PC-9 (cell line): ENCODE measurements at regions of chr3 and their contacts with region 1.

Region 1: DNA sequence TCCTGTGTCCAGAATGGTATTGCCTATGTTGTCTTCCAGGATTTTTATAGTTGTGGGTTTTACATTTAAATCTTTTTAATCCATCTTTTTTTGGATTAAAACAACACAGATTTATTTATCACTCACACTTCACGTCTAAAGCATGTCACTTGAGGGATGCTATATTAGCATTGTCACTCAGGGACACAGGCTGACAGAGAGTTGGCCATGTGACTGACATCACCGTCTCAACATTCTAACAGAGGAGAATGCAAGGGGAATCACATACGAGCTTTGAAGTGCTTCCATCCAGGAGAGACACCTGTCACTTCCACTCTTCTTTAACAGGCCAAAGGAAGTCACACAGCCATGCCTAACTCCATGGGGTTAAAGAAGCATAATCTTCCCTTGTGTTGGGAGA is 204.6 kb upstream of the AZI2 start:
- DNase-seq: no peak
- H3K4me3 ChIP-seq: no peak overlapping the region
- H3K27ac ChIP-seq: no peak overlapping the region
- H3K4me1 ChIP-seq: no peaks in the 10 kb centered on the region
- H3K27me3 ChIP-seq: no peaks in the 10 kb centered on the region
- CTCF ChIP-seq: no peak

Region 2: DNA sequence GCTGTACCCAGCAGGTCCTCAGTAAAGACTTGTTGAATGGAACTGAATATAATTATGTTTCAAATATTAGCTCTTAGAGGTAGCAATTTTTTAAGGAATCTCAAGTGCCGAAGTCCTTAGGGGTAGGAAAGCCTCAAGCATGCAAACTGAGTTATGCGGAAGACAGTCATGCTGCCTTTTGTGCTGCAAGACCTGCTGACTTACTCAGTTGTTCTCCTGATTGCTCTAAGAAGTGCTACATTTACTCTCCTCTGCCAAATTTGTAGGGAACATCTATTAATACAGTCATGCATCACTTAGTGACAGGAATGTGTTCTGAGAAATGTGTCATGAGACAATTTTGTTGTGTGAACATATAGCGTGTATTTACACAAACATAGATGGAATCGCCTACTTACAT is 121.0 kb after region 1 on chr3:
- CTCF ChIA-PET with region 1: no interaction called
- POLR2A ChIA-PET with region 1: no interaction called
- intact Hi-C with region 1: loop called (anchors 5 kb)
- DNase-seq: no peak
- H3K4me3 ChIP-seq: no peak overlapping the region
- H3K27ac ChIP-seq: no peak overlapping the region
- H3K4me1 ChIP-seq: no peaks in the 10 kb centered on the region
- H3K27me3 ChIP-seq: no peaks in the 10 kb centered on the region; the same call in 1 of the 2 replicates
- CTCF ChIP-seq: no peak

Region 3: GRCh38 chr3:28916713-28917499 is 363.7 kb after region 1 on chr3:
- CTCF ChIA-PET with region 1: no interaction called
- POLR2A ChIA-PET with region 1: no interaction called
- intact Hi-C with region 1: no loop called
- DNase-seq: no peak
- H3K4me3 ChIP-seq: no peak overlapping the region
- H3K27ac ChIP-seq: no peak overlapping the region
- H3K4me1 ChIP-seq: no peaks in the 10 kb centered on the region
- H3K27me3 ChIP-seq: no peaks in the 10 kb centered on the region
- CTCF ChIP-seq: no peak